ENCODE measurements at regions of chr2 and their contacts with region 1.

Region 1: GRCh38 chr2:111120253-111121027 is at the start of gene BCL2L11:
- DNase-seq: peak; percentile 94
- H3K4me3 Mint-ChIP-seq: peak within 1 kb of the TSS; percentile 90
- H3K27ac Mint-ChIP-seq: peak within 1 kb of the TSS; percentile 88
- H3K4me1 Mint-ChIP-seq: peaks cover 60% of the 10 kb centered on the region
- H3K27me3 Mint-ChIP-seq: peaks cover 13% of the 10 kb centered on the region
- total RNA-seq, gene BCL2L11: 21.9 to 25.6 TPM

Region 2: DNA sequence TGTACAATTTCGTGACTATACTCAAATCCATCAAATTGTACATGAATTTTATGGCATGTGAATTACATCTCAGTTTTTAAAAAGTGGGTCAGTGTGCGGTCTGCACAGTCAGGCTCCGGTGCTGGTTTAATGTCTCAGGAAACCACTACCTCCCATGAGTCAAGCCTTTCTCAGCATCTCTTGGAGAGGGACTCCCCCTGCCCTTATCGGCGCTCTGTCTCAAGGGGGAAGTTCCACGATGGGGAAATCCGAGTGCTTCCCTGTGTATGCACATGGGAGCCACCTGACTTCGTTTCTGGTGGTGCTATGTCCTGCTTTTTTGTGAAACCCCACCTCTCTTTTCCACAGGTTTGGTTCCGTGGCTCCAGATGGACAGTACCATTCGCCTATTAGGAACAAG is 315.5 kb before region 1 on chr2:
- CTCF ChIA-PET with region 1: no interaction called
- POLR2A ChIA-PET with region 1: no interaction called
- intact Hi-C with region 1: loop called (anchors 2 kb)
- DNase-seq: peak; percentile 85
- H3K4me3 Mint-ChIP-seq: peak overlapping the region; percentile 3
- H3K27ac Mint-ChIP-seq: peak overlapping the region; percentile 29
- H3K4me1 Mint-ChIP-seq: peaks cover 16% of the 10 kb centered on the region
- H3K27me3 Mint-ChIP-seq: peaks cover 43% of the 10 kb centered on the region

Region 3: GRCh38 chr2:111049792-111050640 is 70.4 kb before region 1 on chr2:
- CTCF ChIA-PET with region 1: interaction called, 3 read pairs
- POLR2A ChIA-PET with region 1: no interaction called
- intact Hi-C with region 1: loop called (anchors 2 kb)
- DNase-seq: peak; percentile 46
- H3K4me3 Mint-ChIP-seq: no peak overlapping the region
- H3K27ac Mint-ChIP-seq: no peak overlapping the region
- H3K4me1 Mint-ChIP-seq: peaks cover 38% of the 10 kb centered on the region
- H3K27me3 Mint-ChIP-seq: peaks cover 65% of the 10 kb centered on the region

Region 4: GRCh38 chr2:111100765-111101162 is 19.7 kb before region 1 on chr2:
- CTCF ChIA-PET with region 1: interaction called, 4 read pairs
- POLR2A ChIA-PET with region 1: interaction called, 7 read pairs
- intact Hi-C with region 1: loop called (anchors 1 kb)
- DNase-seq: peak; percentile 51
- H3K4me3 Mint-ChIP-seq: no peak overlapping the region
- H3K27ac Mint-ChIP-seq: no peak overlapping the region
- H3K4me1 Mint-ChIP-seq: peaks cover 22% of the 10 kb centered on the region
- H3K27me3 Mint-ChIP-seq: peaks cover 38% of the 10 kb centered on the region

Region 5: DNA sequence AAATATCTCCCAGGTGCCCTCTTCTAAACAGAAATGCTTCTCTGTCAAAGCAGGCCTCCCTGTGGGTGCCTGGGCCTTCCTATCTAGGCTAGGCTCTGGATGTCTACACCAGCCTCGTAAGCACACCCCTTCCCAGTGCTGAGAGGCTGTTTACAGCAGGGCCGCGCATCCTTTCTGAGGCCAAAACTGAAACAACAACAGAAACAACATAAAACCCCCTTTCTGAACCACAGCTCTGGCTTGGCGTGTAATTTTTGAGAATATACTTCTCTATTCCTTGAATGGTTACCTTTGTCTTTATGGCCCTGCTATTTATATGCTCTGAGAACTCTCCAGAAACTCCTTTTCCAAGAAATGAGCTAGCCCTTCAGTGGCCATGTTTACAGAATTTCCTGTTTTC is 118.7 kb after region 1 on chr2:
- CTCF ChIA-PET with region 1: no interaction called
- POLR2A ChIA-PET with region 1: no interaction called
- intact Hi-C with region 1: no loop called
- DNase-seq: no peak
- H3K4me3 Mint-ChIP-seq: no peak overlapping the region
- H3K27ac Mint-ChIP-seq: no peak overlapping the region
- H3K4me1 Mint-ChIP-seq: no peaks in the 10 kb centered on the region
- H3K27me3 Mint-ChIP-seq: no peaks in the 10 kb centered on the region

Region 6: GRCh38 chr2:111698743-111699554 is 578.5 kb after region 1 on chr2:
- CTCF ChIA-PET with region 1: interaction called, 4 read pairs
- POLR2A ChIA-PET with region 1: no interaction called
- intact Hi-C with region 1: loop called (anchors 1 kb)
- DNase-seq: peak; percentile 84
- H3K4me3 Mint-ChIP-seq: peak overlapping the region; percentile 44
- H3K27ac Mint-ChIP-seq: peak overlapping the region; percentile 70
- H3K4me1 Mint-ChIP-seq: peaks cover 32% of the 10 kb centered on the region
- H3K27me3 Mint-ChIP-seq: peaks cover 13% of the 10 kb centered on the region